Transverse colon (tissue), 4 donors: ENCODE measurements at regions of chr18 and their contacts with region 1.

Region 1: DNA sequence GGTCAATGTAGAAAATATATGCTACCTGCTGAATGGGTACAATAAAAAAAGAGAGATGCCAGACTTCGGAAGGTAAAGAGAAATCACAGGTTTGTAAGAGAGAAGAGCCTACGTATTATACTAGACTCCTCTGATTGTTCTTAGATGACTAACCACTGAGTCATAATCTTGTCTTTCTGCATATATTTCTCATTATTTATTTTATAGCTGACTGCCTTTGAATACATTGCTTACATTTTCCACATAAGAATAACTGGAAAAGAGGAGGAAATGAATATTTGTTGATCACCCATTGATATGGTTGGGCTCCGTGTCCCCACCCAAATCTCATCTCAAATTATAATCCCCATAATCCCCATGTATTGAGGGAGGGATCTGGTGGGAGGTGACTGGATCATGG is 90.3 kb upstream of the RAB27B start:
- DNase-seq: no peak
- H3K4me3 ChIP-seq: no peak overlapping the region
- H3K27ac ChIP-seq: no peak overlapping the region
- H3K4me1 ChIP-seq: peaks cover 0 to 6% (median 2%) of the 10 kb centered on the region in 4 donors
- H3K27me3 ChIP-seq: no peaks in the 10 kb centered on the region
- CTCF ChIP-seq: no peak
- EP300 ChIP-seq: no peak
- POLR2A ChIP-seq: no peak

Region 2: DNA sequence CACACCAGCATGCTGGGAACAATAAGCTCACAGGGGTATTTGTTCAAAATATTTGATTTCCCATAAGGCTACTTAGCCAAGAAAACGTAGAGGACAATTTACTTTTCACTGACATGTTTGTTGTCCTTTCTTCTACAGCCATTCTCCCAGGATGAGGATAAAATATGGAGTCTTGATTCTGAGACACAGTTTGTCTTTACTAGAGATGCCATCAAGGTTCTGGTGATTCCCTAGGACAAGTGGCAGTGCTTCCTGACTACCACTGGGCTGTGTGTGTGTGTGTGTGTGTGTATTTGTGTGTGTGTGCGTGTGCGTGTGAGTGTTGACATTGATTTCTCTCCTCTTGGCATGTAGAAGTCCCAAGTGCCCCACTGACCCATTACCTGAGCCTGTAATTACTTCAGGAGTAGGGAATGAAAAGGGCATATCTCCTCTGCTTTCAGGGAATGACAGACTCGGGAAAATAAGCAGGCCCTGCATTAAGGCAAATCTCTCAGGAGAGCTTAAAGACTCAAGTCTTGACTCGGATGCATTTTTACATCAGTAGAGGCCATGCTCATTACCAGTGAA is 1636.4 kb before region 1 on chr18:
- in situ Hi-C with region 1: no loop called
- intact Hi-C with region 1: no loop called
- DNase-seq: no peak
- H3K4me3 ChIP-seq: no peak overlapping the region
- H3K27ac ChIP-seq: no peak overlapping the region
- H3K4me1 ChIP-seq: no peaks in the 10 kb centered on the region
- H3K27me3 ChIP-seq: no peaks in the 10 kb centered on the region
- CTCF ChIP-seq: no peak
- EP300 ChIP-seq: no peak
- POLR2A ChIP-seq: no peak

Region 3: DNA sequence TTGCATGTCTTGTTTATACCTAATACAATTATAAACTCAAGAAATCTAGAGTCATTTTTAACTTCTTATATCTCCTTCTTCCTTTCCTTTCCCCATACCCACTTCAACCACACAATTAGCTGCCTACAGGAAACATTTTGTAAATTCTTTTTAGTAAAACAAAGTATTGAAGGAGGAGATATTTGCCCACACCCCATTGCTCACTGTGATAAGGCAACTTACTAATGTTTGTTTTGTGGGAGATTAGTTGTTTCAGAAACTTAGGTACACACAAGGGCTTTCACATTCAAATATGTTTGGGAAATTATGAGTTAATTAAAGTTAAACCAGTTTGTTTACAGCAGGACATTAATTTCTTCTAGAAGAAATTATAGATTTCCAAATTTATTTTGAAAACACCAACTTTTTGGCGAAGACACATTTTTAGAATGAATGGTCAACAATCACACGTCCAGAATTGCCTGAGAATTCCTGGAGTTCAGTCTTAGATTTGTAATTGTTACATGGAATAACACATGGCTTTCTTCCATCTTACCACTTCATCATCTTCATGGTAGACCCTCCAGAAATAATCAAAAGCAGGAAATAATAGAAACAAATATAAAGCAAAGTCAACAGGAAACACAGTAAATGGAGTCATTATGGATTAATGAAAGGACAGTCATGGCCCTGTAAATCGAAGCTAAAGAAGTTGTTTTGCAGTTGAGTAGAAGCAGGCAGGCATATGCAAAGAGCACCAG is 27.8 kb after region 1 on chr18:
- in situ Hi-C with region 1: no loop called
- intact Hi-C with region 1: no loop called
- DNase-seq: no peak
- H3K4me3 ChIP-seq: no peak overlapping the region
- H3K27ac ChIP-seq: peak overlapping the region in 1 of 4 donors; percentile 2
- H3K4me1 ChIP-seq: peaks cover 0 to 7% (median 2%) of the 10 kb centered on the region in 4 donors
- H3K27me3 ChIP-seq: no peaks in the 10 kb centered on the region
- CTCF ChIP-seq: no peak
- EP300 ChIP-seq: no peak
- POLR2A ChIP-seq: no peak

Region 4: DNA sequence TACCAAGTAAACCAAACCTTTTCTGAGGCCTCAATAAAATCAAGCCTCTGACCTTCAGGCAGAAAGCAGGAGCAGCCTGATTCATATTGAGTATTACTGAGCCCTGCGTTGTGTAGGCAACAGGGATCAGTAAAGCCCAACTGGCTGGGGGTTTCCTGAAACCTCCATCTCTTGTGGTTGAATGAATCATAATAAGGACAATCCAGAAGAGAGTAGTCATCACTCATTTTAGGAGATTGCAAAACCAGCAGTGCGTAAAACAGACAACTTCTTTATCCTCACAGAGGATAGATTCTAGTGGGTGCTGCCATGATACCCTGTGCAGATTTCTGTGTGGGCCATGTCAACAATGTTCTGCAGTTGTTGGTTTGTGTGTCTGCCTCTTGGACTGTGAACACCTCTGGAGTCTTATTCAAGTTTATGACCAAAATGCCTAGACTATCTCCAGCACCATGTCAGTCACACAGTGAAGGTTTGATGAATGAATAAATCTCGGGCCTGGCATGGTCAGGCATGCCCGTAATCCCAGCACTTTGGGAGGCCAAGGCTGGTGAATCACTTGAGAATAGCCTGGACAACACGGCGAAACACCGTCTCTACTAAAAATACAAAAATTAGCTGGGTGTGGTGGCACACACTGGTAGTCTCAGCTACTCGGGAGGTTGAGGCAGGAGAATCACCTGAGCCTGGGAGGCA is 38.4 kb after region 1 on chr18:
- in situ Hi-C with region 1: no loop called
- intact Hi-C with region 1: loop called (anchors 1 kb)
- DNase-seq: no peak
- H3K4me3 ChIP-seq: no peak overlapping the region
- H3K27ac ChIP-seq: peak overlapping the region in 2 of 4 donors; percentile 30 to 47
- H3K4me1 ChIP-seq: peaks cover 0 to 31% (median 3%) of the 10 kb centered on the region in 4 donors
- H3K27me3 ChIP-seq: no peaks in the 10 kb centered on the region
- CTCF ChIP-seq: no peak
- EP300 ChIP-seq: no peak
- POLR2A ChIP-seq: no peak